Activated B cell treated with CpG ODN at 0.5 μM for 24 hours (primary cell): ENCODE measurements at regions of chr17 and their contacts with region 1.

Region 1: GRCh38 chr17:49677933-49678847 is at the start of gene SPOP:
- DNase-seq: peak; percentile 95
- ATAC-seq: peak; percentile 91
- H3K4me3 Mint-ChIP-seq: peak within 1 kb of the TSS; percentile 98
- H3K27ac Mint-ChIP-seq: peak within 1 kb of the TSS; percentile 99
- H3K4me1 Mint-ChIP-seq: peaks cover 43% of the 10 kb centered on the region
- H3K27me3 Mint-ChIP-seq: peaks cover 3% of the 10 kb centered on the region
- CTCF ChIP-seq: no peak
- total RNA-seq, gene SPOP: 57.4 and 65.8 TPM in 2 replicates

Region 2: GRCh38 chr17:47895856-47896671 is 1782.1 kb before region 1 on chr17 and contains the start of gene SP2:
- CTCF ChIA-PET with region 1: no interaction called
- POLR2A ChIA-PET with region 1: interaction called, 11 read pairs
- intact Hi-C with region 1: no loop called
- DNase-seq: peak; percentile 97
- ATAC-seq: peak; percentile 88
- H3K4me3 Mint-ChIP-seq: peak within 1 kb of the TSS; percentile 98
- H3K27ac Mint-ChIP-seq: peak within 1 kb of the TSS; percentile 99
- H3K4me1 Mint-ChIP-seq: peaks cover 44% of the 10 kb centered on the region
- H3K27me3 Mint-ChIP-seq: no peaks in the 10 kb centered on the region
- CTCF ChIP-seq: no peak
- total RNA-seq, gene SP2: 26.5 and 28.5 TPM in 2 replicates

Region 3: GRCh38 chr17:49343273-49343672 is 334.9 kb before region 1 on chr17:
- CTCF ChIA-PET with region 1: no interaction called
- POLR2A ChIA-PET with region 1: no interaction called
- intact Hi-C with region 1: loop called (anchors 5 kb)
- DNase-seq: no peak
- ATAC-seq: peak; percentile 30
- H3K4me3 Mint-ChIP-seq: peak overlapping the region; percentile 72
- H3K27ac Mint-ChIP-seq: peak overlapping the region; percentile 89
- H3K4me1 Mint-ChIP-seq: peaks cover 65% of the 10 kb centered on the region
- H3K27me3 Mint-ChIP-seq: no peaks in the 10 kb centered on the region
- CTCF ChIP-seq: no peak

Region 4: DNA sequence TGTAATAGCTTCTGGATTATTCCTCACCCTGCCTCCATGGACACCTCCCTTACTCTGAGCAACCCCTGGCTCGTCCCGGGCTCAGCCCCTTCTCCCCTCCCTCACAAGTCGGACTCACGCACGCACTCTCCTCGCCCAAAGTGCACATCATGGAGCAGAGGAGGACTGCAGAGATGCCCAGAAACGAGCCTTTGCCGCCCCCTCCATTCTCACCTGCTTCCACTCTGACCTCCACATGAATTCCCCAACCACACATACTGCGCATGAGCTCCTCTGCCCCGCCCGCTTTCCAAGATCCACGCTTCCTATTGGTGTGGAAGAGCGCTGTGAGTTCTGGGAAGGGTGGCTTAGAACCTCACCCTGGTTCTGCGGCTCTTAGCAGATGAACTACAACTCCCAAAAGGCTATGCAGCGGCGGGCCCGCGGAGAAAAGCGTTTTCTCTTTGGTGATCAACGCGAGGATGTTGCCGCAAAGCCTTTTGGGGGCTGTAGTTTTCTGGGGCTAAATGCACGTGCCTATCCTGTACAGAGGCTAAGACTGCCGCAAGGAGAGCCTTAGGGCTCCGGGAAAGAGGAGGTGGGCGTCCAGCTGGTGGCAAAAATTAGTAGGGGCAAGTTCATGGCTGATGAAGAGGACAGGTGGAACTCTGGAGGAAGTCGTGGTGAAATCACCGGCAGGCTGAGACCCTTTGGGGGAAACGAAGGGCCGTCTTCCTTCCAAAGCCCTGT is 263.4 kb before region 1 on chr17 and contains the start of gene PHB1:
- CTCF ChIA-PET with region 1: no interaction called
- POLR2A ChIA-PET with region 1: interaction called, 6 read pairs
- intact Hi-C with region 1: loop called (anchors 10 kb)
- DNase-seq: peak; percentile 78
- ATAC-seq: peak; percentile 98
- H3K4me3 Mint-ChIP-seq: peak within 1 kb of the TSS; percentile 100
- H3K27ac Mint-ChIP-seq: peak within 1 kb of the TSS; percentile 89
- H3K4me1 Mint-ChIP-seq: peaks cover 24% of the 10 kb centered on the region
- H3K27me3 Mint-ChIP-seq: no peaks in the 10 kb centered on the region
- CTCF ChIP-seq: no peak
- total RNA-seq, gene PHB1: 184 and 214 TPM in 2 replicates

Region 5: GRCh38 chr17:49656247-49656646 is 21.9 kb before region 1 on chr17:
- CTCF ChIA-PET with region 1: no interaction called
- POLR2A ChIA-PET with region 1: no interaction called
- intact Hi-C with region 1: no loop called
- DNase-seq: no peak
- ATAC-seq: no peak
- H3K4me3 Mint-ChIP-seq: no peak overlapping the region
- H3K27ac Mint-ChIP-seq: no peak overlapping the region
- H3K4me1 Mint-ChIP-seq: peaks cover 43% of the 10 kb centered on the region
- H3K27me3 Mint-ChIP-seq: no peaks in the 10 kb centered on the region
- CTCF ChIP-seq: no peak

Region 6: DNA sequence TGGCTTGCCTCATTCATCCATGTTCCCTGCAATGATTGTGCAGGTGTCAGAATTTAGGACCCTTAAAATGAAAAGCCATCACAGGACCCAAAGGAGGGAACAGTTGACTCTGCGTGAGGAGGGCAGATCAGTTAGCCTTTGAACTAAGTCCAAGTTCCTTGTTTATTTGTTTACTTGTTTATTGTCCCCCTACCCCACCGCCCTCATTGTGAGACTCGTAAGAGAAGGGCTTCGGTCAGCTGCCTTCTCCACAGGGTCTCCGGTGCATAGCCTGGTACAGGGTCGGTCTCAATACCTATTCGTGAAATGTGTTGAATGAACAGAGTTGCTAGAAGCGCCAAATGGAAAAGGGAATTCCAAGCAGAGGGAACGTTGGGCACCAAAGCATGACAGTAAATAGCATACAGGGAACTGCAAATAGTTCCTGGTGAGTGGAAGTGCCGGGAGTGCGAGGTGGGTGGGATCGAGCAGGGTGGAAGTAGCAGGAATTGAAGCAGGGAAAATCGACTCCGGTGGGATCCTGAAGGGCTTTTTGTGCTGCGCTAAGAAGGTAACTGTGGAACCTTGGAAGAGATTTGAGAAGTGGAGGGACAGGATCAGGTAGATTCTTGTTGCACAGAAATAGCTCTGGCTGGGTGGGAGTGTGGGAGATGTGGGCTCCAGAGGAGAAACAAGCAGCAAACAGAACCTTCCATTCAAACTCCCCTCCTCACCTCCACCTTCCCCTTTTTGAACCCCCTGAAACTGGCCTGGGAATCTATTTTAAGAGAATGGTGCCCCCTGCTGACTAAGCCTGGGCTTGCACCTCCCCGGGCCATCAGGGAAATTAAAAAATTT is 16.9 kb after region 1 on chr17:
- CTCF ChIA-PET with region 1: interaction called, 3 read pairs
- POLR2A ChIA-PET with region 1: interaction called, 11 read pairs
- intact Hi-C with region 1: loop called (anchors 1 kb)
- DNase-seq: peak; percentile 68
- ATAC-seq: peak; percentile 86
- H3K4me3 Mint-ChIP-seq: no peak overlapping the region
- H3K27ac Mint-ChIP-seq: no peak overlapping the region
- H3K4me1 Mint-ChIP-seq: peaks cover 18% of the 10 kb centered on the region
- H3K27me3 Mint-ChIP-seq: no peaks in the 10 kb centered on the region
- CTCF ChIP-seq: peak; percentile 44

Region 7: DNA sequence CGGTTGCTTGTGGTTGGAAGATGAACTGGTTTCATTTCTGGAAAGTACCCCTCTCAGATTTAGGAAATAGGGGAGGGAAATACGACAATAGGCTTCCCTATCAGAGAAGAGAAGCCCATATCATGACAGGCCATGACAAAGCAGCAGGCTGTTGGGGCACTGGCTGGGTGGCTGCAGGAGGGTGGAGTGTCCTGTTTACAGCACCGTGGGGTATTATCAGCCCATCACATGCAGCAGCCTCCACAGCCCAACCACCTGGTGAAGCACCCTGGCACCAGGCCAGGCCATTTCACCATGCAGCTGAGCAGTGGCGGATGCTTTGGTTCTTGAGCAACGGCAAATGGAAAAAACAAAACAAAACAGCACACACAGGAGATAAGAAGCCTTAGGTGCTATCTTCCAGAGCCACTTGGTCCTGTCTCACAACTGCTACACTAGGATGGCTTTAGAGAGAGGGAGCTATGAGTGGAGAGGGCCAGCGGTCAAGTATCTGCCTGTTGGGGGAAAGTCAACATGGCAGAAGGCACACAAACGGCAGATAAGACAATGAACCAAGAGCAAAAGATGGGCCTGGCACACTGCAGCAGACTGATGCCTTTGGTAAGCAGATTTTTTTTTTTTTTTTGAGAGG is 61.6 kb after region 1 on chr17:
- CTCF ChIA-PET with region 1: no interaction called
- POLR2A ChIA-PET with region 1: interaction called, 5 read pairs
- intact Hi-C with region 1: loop called (anchors 1 kb)
- DNase-seq: peak; percentile 75
- ATAC-seq: peak; percentile 91
- H3K4me3 Mint-ChIP-seq: peak overlapping the region; percentile 81
- H3K27ac Mint-ChIP-seq: peak overlapping the region; percentile 99
- H3K4me1 Mint-ChIP-seq: peaks cover 87% of the 10 kb centered on the region
- H3K27me3 Mint-ChIP-seq: no peaks in the 10 kb centered on the region
- CTCF ChIP-seq: no peak

Region 8: DNA sequence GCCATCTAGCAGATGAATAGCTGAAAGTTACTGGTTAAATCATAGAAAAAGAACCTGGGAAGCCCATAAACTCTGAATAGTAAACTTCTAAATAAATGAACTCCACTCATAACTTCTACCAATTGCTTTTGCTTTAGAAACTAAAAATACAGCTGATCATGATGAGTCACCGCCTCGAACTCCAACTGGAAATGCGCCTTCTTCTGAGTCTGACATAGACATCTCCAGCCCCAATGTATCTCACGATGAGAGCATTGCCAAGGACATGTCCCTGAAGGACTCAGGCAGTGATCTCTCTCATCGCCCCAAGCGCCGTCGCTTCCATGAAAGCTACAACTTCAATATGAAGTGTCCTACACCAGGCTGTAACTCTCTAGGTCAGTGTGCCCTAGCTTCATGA is 120.0 kb after region 1 on chr17:
- CTCF ChIA-PET with region 1: no interaction called
- POLR2A ChIA-PET with region 1: interaction called, 10 read pairs
- intact Hi-C with region 1: no loop called
- DNase-seq: no peak
- ATAC-seq: no peak
- H3K4me3 Mint-ChIP-seq: no peak overlapping the region
- H3K27ac Mint-ChIP-seq: no peak overlapping the region
- H3K4me1 Mint-ChIP-seq: peaks cover 9% of the 10 kb centered on the region
- H3K27me3 Mint-ChIP-seq: no peaks in the 10 kb centered on the region
- CTCF ChIP-seq: no peak